ENCODE measurements at regions of chr20 and their contacts with region 1.

Region 1: GRCh38 chr20:1437235-1437904 is 29.3 kb downstream of the NSFL1C start:
- H3K4me3 Mint-ChIP-seq: no peak overlapping the region
- H3K27ac Mint-ChIP-seq: no peak overlapping the region
- H3K4me1 Mint-ChIP-seq: peaks cover 23% of the 10 kb centered on the region
- H3K27me3 Mint-ChIP-seq: peaks cover 7% of the 10 kb centered on the region

Region 2: GRCh38 chr20:1313236-1313964 is 124.0 kb before region 1 on chr20:
- intact Hi-C with region 1: loop called (anchors 1 kb)
- H3K4me3 Mint-ChIP-seq: no peak overlapping the region
- H3K27ac Mint-ChIP-seq: no peak overlapping the region
- H3K4me1 Mint-ChIP-seq: peaks cover 12% of the 10 kb centered on the region
- H3K27me3 Mint-ChIP-seq: peaks cover 8% of the 10 kb centered on the region

Region 3: DNA sequence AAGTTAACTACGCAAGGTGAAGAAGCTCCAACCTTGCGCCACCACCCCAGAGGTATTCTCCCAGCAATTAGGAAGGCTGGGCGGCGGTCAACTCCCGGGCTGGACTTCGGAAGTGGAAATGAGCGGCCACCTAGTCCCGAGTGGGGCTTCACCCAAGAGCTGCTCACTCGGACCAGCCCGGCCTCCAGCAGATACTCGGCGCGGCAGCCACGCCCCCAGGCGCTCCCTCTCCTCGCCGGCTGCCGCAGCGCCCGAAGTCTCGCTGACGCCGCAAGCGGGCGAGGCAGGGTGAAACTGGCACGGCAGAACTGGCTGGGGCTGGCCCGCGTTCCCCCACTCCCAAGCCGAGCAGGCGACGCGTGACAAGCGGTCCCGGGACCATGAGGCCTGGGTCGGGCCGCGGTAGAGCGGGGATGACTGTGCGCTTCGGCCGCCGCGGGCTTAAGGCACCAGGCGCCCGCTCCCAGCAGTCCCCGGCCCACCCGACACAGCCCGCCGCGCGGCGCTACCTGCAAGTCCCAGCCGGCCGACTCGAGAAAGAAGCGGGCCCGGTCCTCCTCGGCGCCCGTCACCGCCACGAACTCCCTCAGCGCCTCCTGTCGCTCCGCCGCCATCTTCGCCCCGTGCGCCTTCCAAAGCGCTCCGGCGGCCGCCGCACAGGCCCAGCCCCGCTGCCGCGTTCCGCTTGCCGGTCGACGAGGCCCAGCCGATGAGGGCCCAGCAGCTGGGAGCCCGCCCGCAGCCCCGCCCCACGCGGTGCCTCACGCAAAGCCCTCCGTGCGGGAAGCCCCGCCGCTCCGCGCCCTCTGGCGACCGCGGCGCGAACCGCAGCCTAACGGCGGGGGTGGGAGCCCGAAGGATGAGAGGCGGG is 29.1 kb after region 1 on chr20 and contains the start of gene NSFL1C:
- intact Hi-C with region 1: no loop called
- H3K4me3 Mint-ChIP-seq: peak within 1 kb of the TSS; percentile 91
- H3K27ac Mint-ChIP-seq: peak within 1 kb of the TSS; percentile 98
- H3K4me1 Mint-ChIP-seq: peaks cover 75% of the 10 kb centered on the region
- H3K27me3 Mint-ChIP-seq: no peaks in the 10 kb centered on the region

Region 4: GRCh38 chr20:1513801-1514200 is 76.4 kb after region 1 on chr20:
- intact Hi-C with region 1: no loop called
- H3K4me3 Mint-ChIP-seq: no peak overlapping the region
- H3K27ac Mint-ChIP-seq: no peak overlapping the region
- H3K4me1 Mint-ChIP-seq: peaks cover 6% of the 10 kb centered on the region
- H3K27me3 Mint-ChIP-seq: peaks cover 2% of the 10 kb centered on the region

Measured in dendritic cell treated with granulocyte-macrophage colony-stimulating factor and Interleukin-4, amounts not matched to agents 40 ng/mL and 50 ng/mL, for 4 days (primary cell).